Motor neuron (in vitro differentiated cells): ENCODE measurements at regions of chr20 and their contacts with region 1.

Region 1: GRCh38 chr20:32902456-32903420 is 44.0 kb downstream of the EFCAB8 start:
- ATAC-seq: peak; percentile 53 to 89 (median 62)
- H3K4me3 ChIP-seq: no peak overlapping the region
- H3K27ac ChIP-seq: no peak overlapping the region
- H3K4me1 ChIP-seq: no peaks in the 10 kb centered on the region

Region 2: DNA sequence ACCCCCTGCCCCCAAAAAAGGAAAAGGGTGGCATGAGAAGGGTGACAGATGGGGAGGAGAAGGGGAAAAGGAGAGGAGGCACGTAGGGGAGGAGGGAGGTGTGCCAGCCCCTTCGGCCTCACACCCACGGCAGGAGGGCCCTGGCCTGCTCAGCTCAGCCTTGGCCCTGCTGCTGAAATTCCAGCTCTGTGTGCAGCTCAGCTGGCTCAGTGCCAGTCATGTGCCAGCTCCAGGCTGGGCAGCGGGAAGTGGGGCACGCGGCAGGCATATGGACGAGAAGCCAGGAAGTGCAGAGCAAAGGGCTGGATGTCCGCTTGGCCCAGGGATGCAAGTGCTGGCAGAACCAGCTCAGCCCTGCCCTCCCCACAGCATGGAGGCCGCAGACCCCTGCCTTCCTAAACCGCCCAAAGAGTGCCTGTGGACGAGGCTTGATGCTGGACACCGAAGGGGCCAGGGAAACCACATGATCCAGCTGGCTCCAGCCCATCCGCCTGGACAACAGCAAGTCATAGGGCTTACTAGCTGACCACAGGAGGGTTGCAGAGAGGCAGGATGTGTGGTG is 377.8 kb before region 1 on chr20:
- in situ Hi-C with region 1: no loop called
- ATAC-seq: peak in 1 of 8 experiments; percentile 5
- H3K4me3 ChIP-seq: no peak overlapping the region
- H3K27ac ChIP-seq: no peak overlapping the region
- H3K4me1 ChIP-seq: peaks cover 52 to 55% of the 10 kb centered on the region in 2 donors

Region 3: DNA sequence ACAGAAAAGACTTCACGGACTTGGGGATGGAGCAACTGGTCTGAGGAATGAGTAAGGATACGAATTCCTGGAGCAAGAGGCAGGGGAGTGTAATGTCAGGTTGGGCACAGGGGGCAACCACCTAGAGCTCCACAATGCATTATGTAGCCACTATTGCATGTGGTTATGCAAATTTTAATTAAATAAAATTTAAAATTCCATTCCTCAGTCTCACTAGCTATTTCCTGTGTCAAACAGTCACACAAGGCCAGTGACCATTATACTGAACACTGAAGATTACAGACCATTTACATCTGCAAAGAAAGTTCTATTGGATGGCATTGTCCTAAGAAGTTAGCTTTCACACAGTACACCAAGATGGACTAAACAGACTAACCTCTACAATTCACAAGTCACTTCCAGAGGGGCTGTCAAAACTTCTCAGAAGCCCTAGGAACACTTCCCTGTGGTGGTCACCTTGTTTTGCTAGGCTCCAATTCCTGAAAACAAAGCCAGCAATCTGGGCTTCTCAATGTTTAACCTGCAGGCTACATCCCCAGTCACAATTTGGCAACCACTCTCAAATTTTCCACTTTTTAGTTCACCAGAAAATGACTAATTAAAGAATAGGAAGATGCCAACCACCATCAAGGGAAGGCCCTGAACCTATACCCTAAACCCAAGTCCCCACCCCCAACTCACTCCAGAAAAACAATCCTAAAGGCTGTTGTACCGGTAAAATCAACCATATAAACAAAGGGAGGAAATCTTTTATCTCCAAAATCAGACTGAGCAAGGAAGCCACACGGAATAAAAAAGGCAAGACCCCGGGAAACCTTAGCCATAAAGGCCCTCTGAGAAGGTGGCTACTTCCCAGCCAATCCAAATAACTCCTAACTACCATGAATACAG is 194.8 kb before region 1 on chr20:
- in situ Hi-C with region 1: no loop called
- ATAC-seq: peak in 3 of 8 experiments; percentile 74 to 91 (median 90)
- H3K4me3 ChIP-seq: no peak overlapping the region
- H3K27ac ChIP-seq: no peak overlapping the region
- H3K4me1 ChIP-seq: peaks cover 5 to 13% of the 10 kb centered on the region in 2 donors

Region 4: GRCh38 chr20:33062105-33062824 is 159.5 kb after region 1 on chr20:
- in situ Hi-C with region 1: loop called in 1 of 9 experiments (anchors 25 kb)
- ATAC-seq: peak in 1 of 8 experiments; percentile 35
- H3K4me3 ChIP-seq: no peak overlapping the region
- H3K27ac ChIP-seq: no peak overlapping the region
- H3K4me1 ChIP-seq: peaks cover 9% of the 10 kb centered on the region in 2 donors

Region 5: GRCh38 chr20:33097001-33097400 is 194.3 kb after region 1 on chr20:
- in situ Hi-C with region 1: loop called in 1 of 9 experiments (anchors 10 kb)
- ATAC-seq: no peak
- H3K4me3 ChIP-seq: no peak overlapping the region
- H3K27ac ChIP-seq: no peak overlapping the region
- H3K4me1 ChIP-seq: no peaks in the 10 kb centered on the region